Activated CD4-positive, alpha-beta memory T cell treated with anti-CD3 and anti-CD28 coated beads for 36 hours (primary cell): ENCODE measurements at regions of chr5 and their contacts with region 1.

Region 1: GRCh38 chr5:159456722-159457465 is 126.6 kb upstream of the IL12B start:
- DNase-seq: peak; percentile 84
- H3K4me3 Mint-ChIP-seq: no peak overlapping the region
- H3K27ac Mint-ChIP-seq: no peak overlapping the region
- H3K4me1 Mint-ChIP-seq: peaks cover 43% of the 10 kb centered on the region
- H3K27me3 Mint-ChIP-seq: peaks cover 11% of the 10 kb centered on the region

Region 2: DNA sequence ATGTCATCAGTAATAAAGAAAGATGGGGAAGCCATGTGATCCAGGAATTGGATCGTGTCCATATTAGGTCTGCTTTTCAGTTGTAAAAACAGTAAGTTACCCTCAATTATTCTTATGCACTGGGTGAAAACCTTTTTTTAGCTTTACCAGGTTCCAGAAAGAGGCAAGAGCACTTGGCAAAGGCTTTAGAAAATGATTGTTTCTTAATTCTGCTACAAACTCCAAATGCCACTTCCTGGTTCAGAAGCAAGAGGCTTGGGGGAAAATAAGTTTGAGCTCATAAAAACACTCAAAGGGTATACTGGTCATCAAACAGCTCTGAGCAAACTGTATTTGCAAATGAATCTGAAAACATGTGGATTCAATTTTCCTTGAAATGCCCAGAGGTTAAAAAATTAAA is 972.7 kb before region 1 on chr5:
- CTCF ChIA-PET with region 1: no interaction called
- POLR2A ChIA-PET with region 1: no interaction called
- intact Hi-C with region 1: no loop called
- DNase-seq: no peak
- H3K4me3 Mint-ChIP-seq: no peak overlapping the region
- H3K27ac Mint-ChIP-seq: no peak overlapping the region
- H3K4me1 Mint-ChIP-seq: no peaks in the 10 kb centered on the region
- H3K27me3 Mint-ChIP-seq: peaks cover 6% of the 10 kb centered on the region

Region 3: GRCh38 chr5:158958021-158958994 is 498.6 kb before region 1 on chr5:
- CTCF ChIA-PET with region 1: no interaction called
- POLR2A ChIA-PET with region 1: no interaction called
- intact Hi-C with region 1: loop called (anchors 5 kb)
- DNase-seq: peak; percentile 31
- H3K4me3 Mint-ChIP-seq: no peak overlapping the region
- H3K27ac Mint-ChIP-seq: peak overlapping the region; percentile 8
- H3K4me1 Mint-ChIP-seq: peaks cover 20% of the 10 kb centered on the region
- H3K27me3 Mint-ChIP-seq: no peaks in the 10 kb centered on the region

Region 4: GRCh38 chr5:159341914-159342313 is 115.0 kb before region 1 on chr5:
- CTCF ChIA-PET with region 1: interaction called, 4 read pairs
- POLR2A ChIA-PET with region 1: interaction called, 5 read pairs
- intact Hi-C with region 1: loop called (anchors 1 kb)
- DNase-seq: peak; percentile 74
- H3K4me3 Mint-ChIP-seq: no peak overlapping the region
- H3K27ac Mint-ChIP-seq: no peak overlapping the region
- H3K4me1 Mint-ChIP-seq: peaks cover 59% of the 10 kb centered on the region
- H3K27me3 Mint-ChIP-seq: no peaks in the 10 kb centered on the region

Region 5: GRCh38 chr5:159444441-159445082 is 12.3 kb before region 1 on chr5:
- CTCF ChIA-PET with region 1: interaction called, 6 read pairs
- POLR2A ChIA-PET with region 1: no interaction called
- intact Hi-C with region 1: loop called (anchors 2 kb)
- DNase-seq: no peak
- H3K4me3 Mint-ChIP-seq: no peak overlapping the region
- H3K27ac Mint-ChIP-seq: no peak overlapping the region
- H3K4me1 Mint-ChIP-seq: no peaks in the 10 kb centered on the region
- H3K27me3 Mint-ChIP-seq: peaks cover 6% of the 10 kb centered on the region

Region 6: DNA sequence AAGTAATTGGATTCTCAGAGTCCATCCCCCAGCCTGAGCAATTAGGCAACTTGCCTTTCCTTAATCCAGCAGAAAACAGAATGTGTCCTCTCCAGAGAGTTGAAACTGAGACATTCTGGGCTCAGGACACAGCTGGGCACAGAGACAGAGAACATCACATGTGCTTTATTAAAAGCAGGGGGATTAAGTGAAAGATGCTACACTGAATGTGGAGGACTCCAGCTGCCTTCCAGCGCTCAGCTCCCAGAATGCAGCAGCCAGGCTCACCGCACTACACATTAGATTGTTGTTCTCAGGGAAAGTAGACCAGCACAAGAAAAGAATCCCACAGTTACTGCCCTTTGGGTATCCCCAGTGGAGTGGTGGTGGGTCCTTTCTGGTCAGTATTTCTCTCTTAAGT is 15.0 kb after region 1 on chr5:
- CTCF ChIA-PET with region 1: no interaction called
- POLR2A ChIA-PET with region 1: no interaction called
- intact Hi-C with region 1: no loop called
- DNase-seq: no peak
- H3K4me3 Mint-ChIP-seq: no peak overlapping the region
- H3K27ac Mint-ChIP-seq: no peak overlapping the region
- H3K4me1 Mint-ChIP-seq: peaks cover 19% of the 10 kb centered on the region
- H3K27me3 Mint-ChIP-seq: peaks cover 1% of the 10 kb centered on the region

Region 7: GRCh38 chr5:159773062-159773924 is 316.4 kb after region 1 on chr5:
- CTCF ChIA-PET with region 1: no interaction called
- POLR2A ChIA-PET with region 1: no interaction called
- intact Hi-C with region 1: loop called (anchors 1 kb)
- DNase-seq: peak; percentile 92
- H3K4me3 Mint-ChIP-seq: peak overlapping the region; percentile 39
- H3K27ac Mint-ChIP-seq: peak overlapping the region; percentile 69
- H3K4me1 Mint-ChIP-seq: peaks cover 14% of the 10 kb centered on the region
- H3K27me3 Mint-ChIP-seq: peaks cover 45% of the 10 kb centered on the region

Region 8: GRCh38 chr5:160539431-160539830 is 1082.5 kb after region 1 on chr5:
- CTCF ChIA-PET with region 1: no interaction called
- POLR2A ChIA-PET with region 1: no interaction called
- intact Hi-C with region 1: loop called (anchors 5 kb)
- DNase-seq: peak; percentile 84
- H3K4me3 Mint-ChIP-seq: no peak overlapping the region
- H3K27ac Mint-ChIP-seq: no peak overlapping the region
- H3K4me1 Mint-ChIP-seq: peaks cover 24% of the 10 kb centered on the region
- H3K27me3 Mint-ChIP-seq: no peaks in the 10 kb centered on the region